MCF 10A (cell line): ENCODE measurements at regions of chr12 and their contacts with region 1.

Region 1: GRCh38 chr12:52884526-52885293 is 20.2 kb downstream of the KRT8 start:
- DNase-seq: peak; percentile 77
- H3K4me3 Mint-ChIP-seq: no peak overlapping the region
- H3K27ac Mint-ChIP-seq: no peak overlapping the region
- H3K4me1 Mint-ChIP-seq: peaks cover 4% of the 10 kb centered on the region
- H3K27me3 Mint-ChIP-seq: no peaks in the 10 kb centered on the region
- CTCF ChIP-seq: peak; percentile 93

Region 2: GRCh38 chr12:52372216-52373154 is 512.2 kb before region 1 on chr12:
- CTCF ChIA-PET with region 1: interaction called, 174 read pairs
- POLR2A ChIA-PET with region 1: interaction called, 17 read pairs
- intact Hi-C with region 1: loop called (anchors 1 kb)
- DNase-seq: peak; percentile 86
- H3K4me3 Mint-ChIP-seq: no peak overlapping the region
- H3K27ac Mint-ChIP-seq: no peak overlapping the region
- H3K4me1 Mint-ChIP-seq: no peaks in the 10 kb centered on the region
- H3K27me3 Mint-ChIP-seq: peaks cover 11% of the 10 kb centered on the region
- CTCF ChIP-seq: peak; percentile 90

Region 3: GRCh38 chr12:52741392-52742195 is 143.1 kb before region 1 on chr12:
- CTCF ChIA-PET with region 1: no interaction called
- POLR2A ChIA-PET with region 1: no interaction called
- intact Hi-C with region 1: no loop called
- DNase-seq: peak; percentile 75
- H3K4me3 Mint-ChIP-seq: no peak overlapping the region
- H3K27ac Mint-ChIP-seq: no peak overlapping the region
- H3K4me1 Mint-ChIP-seq: no peaks in the 10 kb centered on the region
- H3K27me3 Mint-ChIP-seq: peaks cover 46% of the 10 kb centered on the region
- CTCF ChIP-seq: no peak

Region 4: DNA sequence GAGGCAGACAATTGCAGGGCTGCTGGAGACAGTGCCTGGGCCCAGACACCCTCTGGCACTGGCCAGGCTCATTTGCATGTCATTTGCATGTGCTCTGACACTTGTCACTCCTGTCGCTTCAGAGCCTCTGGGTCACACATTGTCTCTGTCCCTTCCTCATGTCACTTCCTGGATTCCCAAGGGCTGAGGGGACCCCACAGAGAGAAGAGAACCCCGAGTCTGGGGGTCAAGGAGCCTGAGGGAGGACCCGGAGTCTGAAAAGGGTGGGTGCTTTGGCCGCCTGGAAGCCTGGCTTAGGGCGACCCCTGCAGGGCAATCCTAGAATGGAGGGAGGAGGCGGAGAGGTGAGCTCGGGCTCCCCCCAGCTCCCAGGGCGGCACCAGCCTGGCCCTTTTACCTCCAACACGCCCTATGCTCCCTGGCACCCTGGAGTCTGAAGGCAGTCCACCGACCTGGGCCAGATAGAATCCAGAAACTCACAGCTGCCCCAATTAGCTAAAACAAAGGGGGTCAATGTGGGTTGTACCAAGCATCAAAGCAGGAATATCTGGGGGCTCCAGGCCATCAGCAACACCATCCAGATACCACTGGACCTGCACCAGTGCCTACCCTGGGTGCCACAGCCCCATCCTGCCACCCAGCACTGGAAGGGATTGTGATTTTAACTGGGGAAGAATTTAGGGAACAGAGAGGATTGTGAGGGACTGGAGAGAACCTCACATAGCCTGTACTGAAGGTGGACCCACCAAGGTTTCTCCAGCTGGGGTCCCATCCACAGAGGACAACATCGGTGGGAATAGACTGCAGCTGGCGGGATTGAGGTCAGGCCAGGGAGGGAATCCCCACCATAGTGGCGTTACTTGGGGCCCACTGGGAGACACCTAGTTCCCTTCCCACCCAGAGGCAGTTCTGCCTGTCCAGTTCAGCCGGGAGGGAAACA is 14.1 kb before region 1 on chr12:
- CTCF ChIA-PET with region 1: interaction called, 25 read pairs
- POLR2A ChIA-PET with region 1: interaction called, 6 read pairs
- intact Hi-C with region 1: no loop called
- DNase-seq: peak; percentile 84
- H3K4me3 Mint-ChIP-seq: peak overlapping the region; percentile 14
- H3K27ac Mint-ChIP-seq: peak overlapping the region; percentile 90
- H3K4me1 Mint-ChIP-seq: peaks cover 77% of the 10 kb centered on the region
- H3K27me3 Mint-ChIP-seq: no peaks in the 10 kb centered on the region
- CTCF ChIP-seq: peak; percentile 95

Region 5: GRCh38 chr12:52925717-52926595 is 41.2 kb after region 1 on chr12:
- CTCF ChIA-PET with region 1: interaction called, 13 read pairs
- POLR2A ChIA-PET with region 1: no interaction called
- intact Hi-C with region 1: no loop called
- DNase-seq: no peak
- H3K4me3 Mint-ChIP-seq: no peak overlapping the region
- H3K27ac Mint-ChIP-seq: peak overlapping the region; percentile 94
- H3K4me1 Mint-ChIP-seq: peaks cover 26% of the 10 kb centered on the region
- H3K27me3 Mint-ChIP-seq: no peaks in the 10 kb centered on the region
- CTCF ChIP-seq: no peak

Region 6: GRCh38 chr12:52980693-52981423 is 96.1 kb after region 1 on chr12:
- CTCF ChIA-PET with region 1: interaction called, 747 read pairs
- POLR2A ChIA-PET with region 1: interaction called, 23 read pairs
- intact Hi-C with region 1: loop called (anchors 1 kb)
- DNase-seq: peak; percentile 96
- H3K4me3 Mint-ChIP-seq: no peak overlapping the region
- H3K27ac Mint-ChIP-seq: no peak overlapping the region
- H3K4me1 Mint-ChIP-seq: peaks cover 7% of the 10 kb centered on the region
- H3K27me3 Mint-ChIP-seq: no peaks in the 10 kb centered on the region
- CTCF ChIP-seq: peak; percentile 95